AG04449 (cell line): ENCODE measurements at regions of chr6 and their contacts with region 1.

Region 1: GRCh38 chr6:7238900-7239589 is 74.0 kb downstream of the SSR1 start:
- DNase-seq: no peak
- H3K4me3 ChIP-seq: no peak overlapping the region
- CTCF ChIP-seq: peak; percentile 65

Region 2: GRCh38 chr6:6696867-6697531 is 542.0 kb before region 1 on chr6:
- CTCF ChIA-PET with region 1: interaction called, 10 read pairs
- POLR2A ChIA-PET with region 1: no interaction called
- DNase-seq: no peak
- H3K4me3 ChIP-seq: no peak overlapping the region
- CTCF ChIP-seq: peak; percentile 72

Region 3: GRCh38 chr6:6758915-6759654 is 480.0 kb before region 1 on chr6:
- CTCF ChIA-PET with region 1: interaction called, 11 read pairs
- POLR2A ChIA-PET with region 1: no interaction called
- DNase-seq: no peak
- H3K4me3 ChIP-seq: peak overlapping the region; percentile 20
- CTCF ChIP-seq: peak; percentile 54

Region 4: GRCh38 chr6:7204726-7205125 is 34.3 kb before region 1 on chr6:
- CTCF ChIA-PET with region 1: interaction called, 12 read pairs
- POLR2A ChIA-PET with region 1: interaction called, 3 read pairs
- DNase-seq: peak; percentile 16
- H3K4me3 ChIP-seq: no peak overlapping the region
- CTCF ChIP-seq: no peak

Region 5: GRCh38 chr6:7249946-7250643 is 11.1 kb after region 1 on chr6:
- CTCF ChIA-PET with region 1: interaction called, 39 read pairs
- POLR2A ChIA-PET with region 1: no interaction called
- DNase-seq: no peak
- H3K4me3 ChIP-seq: no peak overlapping the region
- CTCF ChIP-seq: no peak

Region 6: GRCh38 chr6:7282097-7282906 is 43.3 kb after region 1 on chr6:
- CTCF ChIA-PET with region 1: no interaction called
- POLR2A ChIA-PET with region 1: no interaction called
- DNase-seq: no peak
- H3K4me3 ChIP-seq: no peak overlapping the region
- CTCF ChIP-seq: no peak